Activated CD8-positive, alpha-beta T cell treated with anti-CD3 and anti-CD28 coated beads, Interleukin-2, amount 10 ng/mL, durations not matched to agents 7 days and 5 days (primary cell): ENCODE measurements at regions of chr3 and their contacts with region 1.

Region 1: GRCh38 chr3:114285648-114286230 is 8.1 kb upstream of the TIGIT start:
- DNase-seq: no peak
- ATAC-seq: peak; percentile 86
- H3K4me3 Mint-ChIP-seq: peak overlapping the region; percentile 53
- H3K27ac Mint-ChIP-seq: peak overlapping the region; percentile 87
- H3K4me1 Mint-ChIP-seq: peaks cover 14% of the 10 kb centered on the region
- H3K27me3 Mint-ChIP-seq: no peaks in the 10 kb centered on the region

Region 2: GRCh38 chr3:114223143-114223542 is 62.6 kb before region 1 on chr3:
- CTCF ChIA-PET with region 1: interaction called, 25 read pairs
- POLR2A ChIA-PET with region 1: interaction called, 39 read pairs
- DNase-seq: peak; percentile 50
- ATAC-seq: peak; percentile 57
- H3K4me3 Mint-ChIP-seq: peak overlapping the region; percentile 32
- H3K27ac Mint-ChIP-seq: peak overlapping the region; percentile 89
- H3K4me1 Mint-ChIP-seq: peaks cover 90% of the 10 kb centered on the region
- H3K27me3 Mint-ChIP-seq: no peaks in the 10 kb centered on the region